CD8-positive, alpha-beta T cell (primary cell): ENCODE measurements at regions of chr5 and their contacts with region 1.

Region 1: GRCh38 chr5:51618234-51618633 is 235.0 kb downstream of the ISL1 start:
- DNase-seq: no peak
- ATAC-seq: no peak
- H3K4me3 ChIP-seq: no peak overlapping the region
- H3K4me3 Mint-ChIP-seq: no peak overlapping the region
- H3K27ac ChIP-seq: no peak overlapping the region
- H3K27ac Mint-ChIP-seq: no peak overlapping the region
- H3K4me1 ChIP-seq: no peaks in the 10 kb centered on the region
- H3K4me1 Mint-ChIP-seq: no peaks in the 10 kb centered on the region
- H3K27me3 ChIP-seq: no peaks in the 10 kb centered on the region
- H3K27me3 Mint-ChIP-seq: no peaks in the 10 kb centered on the region
- CTCF ChIP-seq: no peak

Region 2: DNA sequence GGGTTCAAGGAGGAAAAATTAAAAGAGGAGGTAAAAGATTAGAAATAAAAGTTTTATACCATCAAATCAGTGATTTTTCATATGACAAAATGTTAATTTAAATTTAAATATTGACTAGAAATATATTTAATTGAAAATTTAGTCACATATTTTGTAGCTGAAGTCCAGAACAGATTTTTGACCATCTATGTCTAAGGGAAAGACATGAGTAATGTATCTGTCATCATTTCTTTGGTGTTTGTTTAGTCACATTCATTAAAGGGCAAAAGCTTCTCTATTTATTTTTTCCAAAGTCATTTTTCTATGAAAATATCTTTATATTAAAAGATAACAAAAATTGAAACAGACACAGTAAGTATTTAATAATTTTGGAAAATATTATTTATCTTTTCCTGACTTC is 487.0 kb before region 1 on chr5:
- CTCF ChIA-PET with region 1: no interaction called
- POLR2A ChIA-PET with region 1: no interaction called
- intact Hi-C with region 1: no loop called
- DNase-seq: no peak
- ATAC-seq: no peak
- H3K4me3 ChIP-seq: no peak overlapping the region
- H3K4me3 Mint-ChIP-seq: no peak overlapping the region
- H3K27ac ChIP-seq: no peak overlapping the region
- H3K27ac Mint-ChIP-seq: no peak overlapping the region
- H3K4me1 ChIP-seq: no peaks in the 10 kb centered on the region
- H3K4me1 Mint-ChIP-seq: no peaks in the 10 kb centered on the region
- H3K27me3 ChIP-seq: no peaks in the 10 kb centered on the region
- H3K27me3 Mint-ChIP-seq: no peaks in the 10 kb centered on the region
- CTCF ChIP-seq: no peak

Region 3: DNA sequence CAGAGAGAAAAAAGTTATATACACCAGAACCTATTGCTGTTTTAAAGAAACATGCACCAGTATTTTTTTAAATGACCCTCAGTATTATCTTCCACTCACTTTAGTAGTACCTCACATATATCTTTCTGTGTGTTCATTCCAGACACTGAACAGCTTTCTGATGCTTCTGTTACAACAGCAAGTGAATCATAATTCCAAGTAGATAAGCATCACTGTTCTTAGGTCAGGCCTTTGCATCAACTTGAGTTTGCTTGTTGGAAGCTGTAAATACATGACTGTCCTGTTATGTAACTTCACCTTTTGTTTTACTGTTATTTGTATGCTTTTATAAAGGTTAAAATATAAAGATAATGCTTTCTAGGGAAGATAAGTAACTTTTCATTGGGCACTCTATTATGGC is 50.6 kb before region 1 on chr5:
- CTCF ChIA-PET with region 1: no interaction called
- POLR2A ChIA-PET with region 1: no interaction called
- intact Hi-C with region 1: no loop called
- DNase-seq: no peak
- ATAC-seq: no peak
- H3K4me3 ChIP-seq: no peak overlapping the region
- H3K4me3 Mint-ChIP-seq: no peak overlapping the region
- H3K27ac ChIP-seq: no peak overlapping the region
- H3K27ac Mint-ChIP-seq: no peak overlapping the region
- H3K4me1 ChIP-seq: no peaks in the 10 kb centered on the region
- H3K4me1 Mint-ChIP-seq: no peaks in the 10 kb centered on the region
- H3K27me3 ChIP-seq: no peaks in the 10 kb centered on the region
- H3K27me3 Mint-ChIP-seq: no peaks in the 10 kb centered on the region
- CTCF ChIP-seq: no peak

Region 4: DNA sequence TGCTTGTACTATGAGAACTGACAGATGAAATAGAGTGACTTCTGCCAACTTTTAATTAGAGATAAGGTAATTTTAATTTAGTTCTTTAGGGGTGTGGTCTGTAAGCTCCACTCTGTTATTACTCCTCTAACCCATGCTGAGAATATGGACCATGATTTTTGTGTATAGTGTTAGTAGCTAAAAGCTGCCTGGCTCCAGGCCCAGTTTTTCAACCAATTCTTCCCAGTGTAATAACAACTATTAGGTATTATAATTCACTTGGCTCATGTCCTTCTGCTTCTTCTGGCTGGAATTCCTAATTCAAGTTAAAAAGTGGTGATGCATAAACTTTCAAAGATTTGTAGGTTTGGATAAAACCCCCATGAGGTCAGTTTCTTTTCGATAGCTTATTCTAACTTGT is 18.6 kb before region 1 on chr5:
- CTCF ChIA-PET with region 1: no interaction called
- POLR2A ChIA-PET with region 1: no interaction called
- intact Hi-C with region 1: loop called in 1 of 2 experiments (anchors 1 kb)
- DNase-seq: no peak
- ATAC-seq: no peak
- H3K4me3 ChIP-seq: no peak overlapping the region
- H3K4me3 Mint-ChIP-seq: no peak overlapping the region
- H3K27ac ChIP-seq: no peak overlapping the region
- H3K27ac Mint-ChIP-seq: no peak overlapping the region
- H3K4me1 ChIP-seq: no peaks in the 10 kb centered on the region
- H3K4me1 Mint-ChIP-seq: no peaks in the 10 kb centered on the region
- H3K27me3 ChIP-seq: no peaks in the 10 kb centered on the region
- H3K27me3 Mint-ChIP-seq: no peaks in the 10 kb centered on the region
- CTCF ChIP-seq: no peak

Region 5: DNA sequence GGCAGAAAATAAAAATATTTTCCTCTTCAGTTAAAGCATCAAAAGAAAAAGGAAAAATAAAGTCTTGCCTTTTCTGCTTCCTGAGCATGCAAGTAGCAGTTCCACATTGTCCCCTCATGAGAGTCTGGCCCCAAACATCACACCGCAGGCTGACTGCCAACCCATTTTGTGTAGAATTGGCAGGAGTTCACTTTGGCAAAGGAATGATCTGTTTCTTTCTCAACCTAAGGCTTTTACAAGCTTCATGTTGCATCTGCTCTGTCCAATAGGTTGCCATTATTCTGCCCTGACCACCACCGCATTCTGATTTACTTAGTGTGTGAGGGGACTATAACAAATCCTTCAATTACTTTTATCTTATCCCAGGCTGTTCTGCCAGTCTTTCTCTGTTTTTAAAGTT is 14.6 kb after region 1 on chr5:
- CTCF ChIA-PET with region 1: no interaction called
- POLR2A ChIA-PET with region 1: no interaction called
- intact Hi-C with region 1: no loop called
- DNase-seq: no peak
- ATAC-seq: no peak
- H3K4me3 ChIP-seq: no peak overlapping the region
- H3K4me3 Mint-ChIP-seq: no peak overlapping the region
- H3K27ac ChIP-seq: no peak overlapping the region
- H3K27ac Mint-ChIP-seq: no peak overlapping the region
- H3K4me1 ChIP-seq: no peaks in the 10 kb centered on the region
- H3K4me1 Mint-ChIP-seq: no peaks in the 10 kb centered on the region
- H3K27me3 ChIP-seq: no peaks in the 10 kb centered on the region
- H3K27me3 Mint-ChIP-seq: no peaks in the 10 kb centered on the region
- CTCF ChIP-seq: no peak

Region 6: DNA sequence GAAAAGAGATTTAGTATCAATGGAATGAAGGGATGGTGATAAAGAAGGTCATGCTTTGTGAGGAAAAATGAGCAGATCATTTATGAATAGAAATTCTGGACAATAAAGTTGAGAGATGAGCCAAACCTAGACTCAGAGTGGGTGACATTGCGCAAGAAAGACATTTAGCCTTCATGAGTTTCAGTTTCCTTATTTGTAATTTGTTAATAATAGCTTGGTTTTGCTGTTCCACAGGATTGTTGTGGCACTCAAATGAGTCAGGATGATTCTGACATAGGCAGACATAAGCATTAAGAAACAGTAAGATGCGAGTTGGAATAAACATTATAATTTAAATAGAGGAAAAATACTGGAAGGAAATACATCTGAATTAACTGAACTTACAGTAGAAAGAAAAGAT is 1405.7 kb after region 1 on chr5:
- CTCF ChIA-PET with region 1: no interaction called
- POLR2A ChIA-PET with region 1: no interaction called
- intact Hi-C with region 1: no loop called
- DNase-seq: no peak
- ATAC-seq: no peak
- H3K4me3 ChIP-seq: no peak overlapping the region
- H3K4me3 Mint-ChIP-seq: no peak overlapping the region
- H3K27ac ChIP-seq: no peak overlapping the region
- H3K27ac Mint-ChIP-seq: no peak overlapping the region
- H3K4me1 ChIP-seq: no peaks in the 10 kb centered on the region
- H3K4me1 Mint-ChIP-seq: no peaks in the 10 kb centered on the region
- H3K27me3 ChIP-seq: no peaks in the 10 kb centered on the region
- H3K27me3 Mint-ChIP-seq: no peaks in the 10 kb centered on the region
- CTCF ChIP-seq: no peak